ENCODE measurements at regions of chr11 and their contacts with region 1.

Region 1: DNA sequence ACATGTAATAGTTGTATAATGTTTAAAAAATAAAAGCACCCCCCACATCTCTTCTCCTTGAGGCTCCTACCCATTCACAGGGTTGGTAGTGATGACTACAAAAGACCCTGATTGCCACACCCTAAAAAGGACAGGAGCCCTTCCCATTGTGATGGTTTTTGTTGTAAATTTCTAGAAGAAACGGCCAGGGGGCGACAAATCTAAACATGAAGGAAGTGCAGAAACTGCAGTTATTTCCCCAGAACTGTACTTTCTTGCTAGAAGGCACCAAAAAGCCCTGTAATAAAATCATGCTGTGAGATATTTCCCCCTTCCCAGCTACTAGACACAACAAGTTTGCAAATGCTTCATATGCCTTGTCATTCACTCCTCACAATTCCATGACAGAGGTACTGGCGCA is 10.8 kb downstream of the PRR5L start:
- DNase-seq: no peak
- H3K4me3 ChIP-seq: no peak overlapping the region
- H3K27ac ChIP-seq: no peak overlapping the region
- H3K4me1 ChIP-seq: no peaks in the 10 kb centered on the region
- H3K27me3 ChIP-seq: no peaks in the 10 kb centered on the region
- CTCF ChIP-seq: peak; percentile 23 to 46 (median 28)

Region 2: DNA sequence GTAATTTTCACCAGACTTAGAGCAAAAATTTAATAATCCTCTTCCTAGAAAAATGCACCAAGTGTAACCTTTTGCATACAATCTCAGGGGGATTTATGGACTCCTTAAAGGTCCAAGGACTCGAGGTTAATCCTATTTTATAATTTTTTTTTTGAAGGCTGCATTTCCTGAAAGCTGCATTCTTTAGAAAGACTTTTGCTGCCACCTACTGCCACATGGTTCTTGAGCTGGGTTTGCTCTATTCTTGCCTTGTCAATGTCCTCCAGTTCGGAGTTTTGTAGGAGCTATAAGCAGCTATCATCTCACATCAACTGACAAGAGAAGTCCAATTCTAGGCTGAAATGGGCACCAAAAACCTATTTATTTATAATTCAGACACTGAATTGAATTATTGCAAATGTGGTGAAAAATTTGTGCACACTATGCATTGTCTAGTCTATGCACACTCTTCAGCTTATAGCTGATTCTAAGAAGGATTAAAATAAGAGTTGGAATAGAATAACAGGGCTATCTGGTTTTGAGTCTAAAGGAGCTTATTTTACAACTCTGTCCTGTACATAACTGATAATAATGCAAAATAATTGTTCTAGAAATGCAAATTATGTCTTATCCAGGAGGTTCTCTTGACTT is 171.9 kb after region 1 on chr11:
- intact Hi-C with region 1: loop called (anchors 5 kb)
- DNase-seq: no peak
- H3K4me3 ChIP-seq: no peak overlapping the region
- H3K27ac ChIP-seq: no peak overlapping the region
- H3K4me1 ChIP-seq: no peaks in the 10 kb centered on the region
- H3K27me3 ChIP-seq: no peaks in the 10 kb centered on the region
- CTCF ChIP-seq: peak; percentile 28 to 62 (median 40)

Measured in ascending aorta (tissue), 2 donors.